ENCODE measurements at regions of chr3 and their contacts with region 1.

Region 1: DNA sequence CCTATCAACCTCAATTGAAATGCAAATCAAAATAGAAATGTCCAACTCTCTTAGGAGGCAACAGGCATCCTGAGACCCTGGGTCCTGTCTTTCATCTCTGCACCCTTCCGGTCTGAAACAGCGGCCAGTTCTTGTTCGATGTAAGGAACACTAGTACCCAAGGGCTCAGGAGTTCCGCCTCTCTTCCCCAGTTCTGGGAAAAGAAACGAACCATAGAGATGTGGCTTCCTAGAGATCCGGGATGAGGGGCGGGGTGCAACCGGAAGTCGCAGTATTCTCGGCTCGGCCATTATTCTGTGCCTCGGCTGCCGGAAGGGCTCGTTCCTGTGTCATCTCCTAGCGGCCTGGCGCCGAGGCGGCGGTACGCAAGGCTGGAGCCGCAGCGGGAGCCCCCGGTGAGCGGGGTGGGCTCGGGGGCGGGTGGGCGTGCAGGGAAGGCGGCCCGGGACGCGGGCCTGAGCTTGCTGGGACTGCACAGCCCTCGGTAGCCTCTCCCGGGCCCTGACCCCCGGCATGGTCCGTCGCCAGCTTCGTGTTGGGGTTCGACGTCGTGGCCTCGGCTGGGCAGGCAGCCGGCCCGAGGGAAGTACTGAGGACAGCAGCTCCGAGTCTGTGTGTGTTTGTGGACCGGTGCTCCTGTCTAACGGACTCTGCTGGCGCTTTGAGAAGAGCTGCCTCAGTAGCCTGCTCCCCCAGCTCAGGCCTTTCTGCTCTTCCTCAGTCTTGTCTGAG is at the start of gene ZNF197:
- DNase-seq: peak; percentile 88
- H3K4me3 Mint-ChIP-seq: peak within 1 kb of the TSS; percentile 90
- H3K27ac Mint-ChIP-seq: peak within 1 kb of the TSS; percentile 81
- H3K4me1 Mint-ChIP-seq: peaks cover 14% of the 10 kb centered on the region
- H3K27me3 Mint-ChIP-seq: no peaks in the 10 kb centered on the region
- total RNA-seq, gene ZNF197: 10.5 and 10.7 TPM in 2 replicates

Region 2: DNA sequence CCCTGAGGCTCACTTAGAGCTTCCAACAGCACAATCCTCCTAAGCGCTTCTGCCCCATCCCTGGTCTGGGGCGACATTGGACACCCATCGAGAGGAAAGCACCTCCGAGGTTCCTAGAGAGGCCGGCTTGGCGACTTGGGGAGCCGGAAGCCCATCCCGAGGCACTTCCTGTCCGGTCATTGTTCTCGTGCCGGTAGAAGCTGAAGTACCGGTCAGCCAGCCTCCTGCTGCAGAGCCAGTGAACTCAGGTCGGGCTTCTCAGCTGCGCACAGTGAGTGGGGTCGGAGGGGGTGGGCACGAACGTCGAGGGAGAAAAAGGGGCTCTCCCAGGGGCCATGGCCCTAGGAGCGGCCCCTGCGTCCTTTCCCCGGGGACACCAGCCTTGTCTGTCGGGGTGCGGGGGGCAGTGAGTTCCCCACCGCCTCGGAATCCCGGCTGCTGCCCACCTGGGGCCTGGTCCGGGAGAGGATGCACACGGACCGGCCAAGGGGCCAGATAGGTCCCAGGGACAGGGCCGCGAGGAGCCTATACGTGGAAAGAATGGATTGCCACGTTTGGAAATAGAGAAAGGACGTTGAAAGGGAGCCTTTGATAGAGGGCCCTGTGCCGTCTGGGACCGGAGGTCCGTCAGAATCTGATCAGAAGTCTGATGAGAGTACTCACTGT is 23.8 kb after region 1 on chr3 and contains the start of gene ZNF35:
- intact Hi-C with region 1: loop called (anchors 2 kb)
- DNase-seq: peak; percentile 76
- H3K4me3 Mint-ChIP-seq: peak within 1 kb of the TSS; percentile 85
- H3K27ac Mint-ChIP-seq: peak within 1 kb of the TSS; percentile 58
- H3K4me1 Mint-ChIP-seq: peaks cover 5% of the 10 kb centered on the region
- H3K27me3 Mint-ChIP-seq: no peaks in the 10 kb centered on the region
- total RNA-seq, gene ZNF35: 4.7 and 4.8 TPM in 2 replicates

Region 3: DNA sequence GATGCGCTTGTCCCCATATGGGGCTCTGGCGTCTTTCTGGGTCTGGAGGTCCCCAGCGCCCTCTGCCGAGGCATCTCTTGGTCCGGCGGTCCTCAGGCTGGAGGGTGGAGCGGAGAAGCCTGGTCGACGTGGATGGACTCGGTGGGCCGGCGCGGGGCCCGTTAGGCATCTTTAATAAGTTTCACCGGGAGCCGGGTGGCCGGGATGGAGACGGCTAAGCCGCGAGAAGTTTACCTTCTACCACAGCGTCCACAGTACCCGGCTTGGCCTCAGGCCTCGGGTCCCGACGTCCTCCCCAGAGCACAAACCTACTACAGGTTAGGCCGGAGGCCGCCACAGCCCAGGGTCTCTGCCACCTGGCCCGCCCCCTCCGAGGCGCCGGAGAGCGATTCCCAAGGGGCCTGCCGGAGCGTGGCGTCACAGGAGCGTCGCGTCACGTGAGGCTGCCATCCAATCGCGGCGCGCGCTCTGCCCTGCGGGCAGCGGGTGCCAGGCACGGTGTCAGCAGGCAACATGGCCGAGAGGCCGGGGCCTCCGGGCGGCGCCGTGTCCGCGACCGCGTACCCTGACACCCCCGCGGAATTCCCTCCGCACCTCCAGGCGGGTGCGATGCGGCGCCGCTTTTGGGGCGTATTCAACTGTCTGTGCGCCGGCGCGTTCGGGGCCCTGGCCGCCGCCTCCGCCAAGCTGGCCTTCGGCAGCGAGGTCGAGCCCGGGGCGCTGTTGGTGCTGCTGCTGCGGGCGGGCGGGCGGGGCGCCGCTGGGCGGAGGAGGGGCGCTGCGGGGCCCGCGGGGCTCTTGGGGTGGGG is 236.7 kb after region 1 on chr3 and contains the start of gene TMEM42:
- intact Hi-C with region 1: loop called (anchors 1 kb)
- DNase-seq: peak; percentile 97
- H3K4me3 Mint-ChIP-seq: peak within 1 kb of the TSS; percentile 90
- H3K27ac Mint-ChIP-seq: peak within 1 kb of the TSS; percentile 91
- H3K4me1 Mint-ChIP-seq: peaks cover 32% of the 10 kb centered on the region
- H3K27me3 Mint-ChIP-seq: no peaks in the 10 kb centered on the region
- total RNA-seq, gene TMEM42: 11.6 and 13.0 TPM in 2 replicates